ENCODE measurements at regions of chr20 and their contacts with region 1.

Region 1: GRCh38 chr20:58895449-58896180 is 43.1 kb downstream of the GNAS start:
- DNase-seq: no peak
- H3K4me3 ChIP-seq: no peak overlapping the region
- H3K4me3 Mint-ChIP-seq: no peak overlapping the region
- H3K27ac ChIP-seq: no peak overlapping the region
- H3K27ac Mint-ChIP-seq: peak overlapping the region in 3 of 7 donors; percentile 36 to 79 (median 41)
- H3K4me1 ChIP-seq: peaks cover 41 to 59% of the 10 kb centered on the region in 2 donors
- H3K4me1 Mint-ChIP-seq: peaks cover 57% of the 10 kb centered on the region
- H3K27me3 ChIP-seq: no peaks in the 10 kb centered on the region
- H3K27me3 Mint-ChIP-seq: no peaks in the 10 kb centered on the region
- CTCF ChIP-seq: no peak

Region 2: DNA sequence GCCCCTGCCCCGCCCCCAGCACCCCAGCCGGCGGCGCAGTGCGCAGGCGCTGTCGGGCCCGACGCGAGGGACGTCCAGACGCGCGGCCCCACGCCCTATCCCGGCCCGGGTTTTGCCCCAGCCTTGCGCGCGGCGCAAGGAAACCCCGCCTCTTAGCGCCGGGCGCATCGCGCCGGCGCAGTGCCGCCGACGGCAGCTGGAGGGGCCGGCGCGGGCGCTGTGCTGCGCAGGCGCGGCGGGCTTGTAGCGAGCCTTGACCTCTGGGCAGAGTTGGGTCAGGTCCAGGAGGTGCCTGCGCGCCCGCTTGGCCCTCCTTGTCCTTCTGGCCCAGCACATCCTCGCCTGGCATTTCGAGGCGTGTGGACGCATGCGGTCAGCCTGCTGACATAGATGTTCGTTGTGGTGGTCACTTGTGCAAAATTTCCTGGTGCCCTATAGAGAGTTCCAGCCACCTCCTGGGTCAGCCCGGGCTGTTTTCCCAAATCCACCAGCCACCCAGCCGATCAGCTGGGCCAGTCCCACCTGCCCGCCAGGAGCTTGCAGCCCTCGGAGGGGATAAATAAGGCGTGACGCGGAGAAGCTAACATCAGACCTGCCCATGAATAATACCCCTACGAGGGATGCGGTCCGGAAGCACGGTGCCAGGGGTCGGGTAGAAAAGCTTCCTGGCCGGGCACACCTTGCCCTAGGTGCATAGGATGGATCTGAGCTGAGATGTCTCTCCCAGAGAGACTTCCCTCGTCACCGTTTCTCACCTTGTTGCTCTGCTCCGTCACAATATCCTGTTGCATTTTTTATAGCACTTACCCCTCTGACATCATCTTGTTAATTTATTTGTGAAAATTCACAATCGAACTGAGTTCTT is 147.4 kb after region 1 on chr20:
- intact Hi-C with region 1: loop called (anchors 5 to 10 kb)
- DNase-seq: peak; percentile 91 to 94 (median 91)
- H3K4me3 ChIP-seq: peak overlapping the region; percentile 76 to 92 (median 79)
- H3K4me3 Mint-ChIP-seq: peak overlapping the region; percentile 85 to 91
- H3K27ac ChIP-seq: peak overlapping the region; percentile 44 to 90
- H3K27ac Mint-ChIP-seq: peak overlapping the region; percentile 86 to 96 (median 92)
- H3K4me1 ChIP-seq: peaks cover 21 to 35% of the 10 kb centered on the region in 2 donors
- H3K4me1 Mint-ChIP-seq: peaks cover 40% of the 10 kb centered on the region
- H3K27me3 ChIP-seq: no peaks in the 10 kb centered on the region
- H3K27me3 Mint-ChIP-seq: peaks cover 0 to 2% (median 2%) of the 10 kb centered on the region in 3 donors
- CTCF ChIP-seq: no peak